Right cardiac atrium (tissue), 5 donors: ENCODE measurements at regions of chr16 and their contacts with region 1.

Region 1: DNA sequence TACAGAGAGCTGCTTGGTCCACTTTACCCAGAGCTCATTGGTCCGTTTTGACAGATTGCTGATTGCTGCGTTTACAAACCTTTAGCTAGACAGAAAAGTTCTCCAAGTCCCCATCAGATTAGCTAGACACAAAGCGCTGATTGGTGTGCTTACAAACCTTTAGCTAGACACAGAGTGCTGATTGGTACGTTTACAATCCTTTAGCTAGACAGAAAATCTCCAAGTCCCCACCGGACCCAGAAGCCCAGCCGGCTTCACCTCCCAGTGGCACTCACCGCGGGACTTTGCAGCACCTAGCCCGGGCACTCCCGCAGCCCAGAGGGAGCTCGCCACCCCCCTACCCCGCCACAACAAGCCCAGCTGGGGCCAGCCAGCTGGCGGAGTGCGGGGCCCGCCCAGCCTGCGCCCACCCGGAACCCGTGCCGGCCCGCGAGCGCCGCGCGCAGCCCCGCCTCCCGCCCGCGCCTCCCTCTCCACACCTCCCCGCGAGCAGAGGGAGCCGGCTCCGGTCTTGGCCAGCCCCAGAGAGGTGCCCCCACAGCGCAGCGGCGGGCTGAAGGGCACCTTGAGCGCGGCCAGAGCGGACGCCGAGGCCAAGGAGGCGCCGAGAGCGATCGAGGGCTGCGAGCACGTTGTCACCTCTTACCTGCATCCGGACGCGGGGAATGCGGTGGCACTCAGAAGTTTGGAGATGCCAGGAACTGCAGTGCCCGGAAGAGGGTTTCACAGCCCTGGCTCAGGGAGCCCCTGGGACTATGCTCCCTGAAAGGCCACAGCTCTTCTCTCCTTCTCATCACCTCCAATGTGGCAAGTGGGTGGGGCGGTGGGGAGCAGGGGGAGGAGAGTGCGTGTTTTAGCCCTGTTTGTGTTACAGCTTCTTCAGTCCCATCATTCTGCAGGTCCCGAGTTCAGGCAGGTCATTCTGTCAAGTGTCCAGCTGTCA is 1504.5 kb downstream of the CDH11 start:
- DNase-seq: peak in 2 of 3 donors; percentile 57 to 63
- ATAC-seq: peak; percentile 74 to 77
- H3K4me3 ChIP-seq: peak overlapping the region; percentile 52
- H3K27ac ChIP-seq: peak overlapping the region; percentile 43
- H3K4me1 ChIP-seq: peaks cover 3% of the 10 kb centered on the region
- H3K27me3 ChIP-seq: no peaks in the 10 kb centered on the region

Region 2: DNA sequence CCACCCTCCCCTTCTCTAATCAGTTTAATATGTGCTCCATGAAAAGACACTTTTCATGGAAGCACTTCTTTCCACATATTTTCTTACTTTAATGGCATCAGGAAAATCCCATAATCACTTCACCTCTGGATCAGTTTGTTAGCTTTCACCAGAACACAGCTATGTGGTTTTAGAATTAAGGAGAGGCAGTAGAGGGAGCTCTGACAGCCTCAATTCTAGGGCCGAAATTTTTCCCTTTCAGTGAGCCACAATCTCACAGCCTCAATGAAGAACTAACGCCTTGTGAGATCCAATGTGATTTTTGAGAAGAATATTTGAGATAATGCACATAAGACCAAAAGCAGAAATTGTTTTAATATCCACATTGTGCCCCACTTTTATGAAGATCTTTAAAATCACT is 87.1 kb before region 1 on chr16:
- intact Hi-C with region 1: loop called in 1 of 4 experiments (anchors 10 kb)
- DNase-seq: no peak
- ATAC-seq: no peak
- H3K4me3 ChIP-seq: no peak overlapping the region
- H3K27ac ChIP-seq: no peak overlapping the region
- H3K4me1 ChIP-seq: no peaks in the 10 kb centered on the region
- H3K27me3 ChIP-seq: no peaks in the 10 kb centered on the region